ENCODE measurements at regions of chr6 and their contacts with region 1.

Region 1: DNA sequence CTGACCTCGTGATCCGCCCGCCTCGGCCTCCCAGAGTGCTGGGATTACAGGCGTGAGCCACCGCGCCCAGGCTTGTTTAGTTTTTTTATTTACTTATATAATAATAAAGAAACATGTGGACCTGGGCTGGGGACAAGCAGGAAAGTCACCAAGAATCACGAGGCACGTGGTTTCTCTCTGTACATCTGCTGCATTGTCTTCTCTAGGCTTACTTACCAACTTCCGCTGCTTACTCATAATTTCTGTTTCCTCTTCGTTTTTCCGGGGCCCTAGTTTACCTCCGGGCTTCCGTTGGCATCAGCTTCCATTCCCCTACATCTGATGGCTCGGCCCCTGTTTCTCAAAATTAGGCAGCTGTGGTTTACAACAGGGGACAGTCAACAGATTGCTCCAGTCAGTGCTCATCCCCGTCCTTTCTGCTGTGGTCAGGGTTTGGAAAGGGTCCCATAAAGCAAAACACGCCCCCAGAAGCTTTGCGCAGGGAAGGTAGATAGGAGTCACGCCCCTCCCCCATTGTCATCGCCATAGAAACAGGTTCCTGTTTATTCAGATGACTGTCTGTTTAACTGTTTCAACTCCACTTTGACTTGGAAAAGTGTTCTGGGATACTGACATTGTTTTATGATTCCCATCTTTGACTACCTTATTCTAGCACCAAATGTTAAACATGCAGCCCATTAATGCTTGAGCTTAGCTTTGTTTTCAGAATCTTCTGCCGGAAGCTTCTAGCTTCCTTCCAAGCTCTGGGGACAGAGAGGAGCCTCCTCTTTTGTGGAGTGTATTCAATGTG is 31.9 kb upstream of the TXLNB start:
- H3K4me3 Mint-ChIP-seq: peak overlapping the region; percentile 37
- H3K27ac Mint-ChIP-seq: peak overlapping the region; percentile 80
- H3K4me1 Mint-ChIP-seq: peaks cover 54% of the 10 kb centered on the region
- H3K27me3 Mint-ChIP-seq: no peaks in the 10 kb centered on the region

Region 2: DNA sequence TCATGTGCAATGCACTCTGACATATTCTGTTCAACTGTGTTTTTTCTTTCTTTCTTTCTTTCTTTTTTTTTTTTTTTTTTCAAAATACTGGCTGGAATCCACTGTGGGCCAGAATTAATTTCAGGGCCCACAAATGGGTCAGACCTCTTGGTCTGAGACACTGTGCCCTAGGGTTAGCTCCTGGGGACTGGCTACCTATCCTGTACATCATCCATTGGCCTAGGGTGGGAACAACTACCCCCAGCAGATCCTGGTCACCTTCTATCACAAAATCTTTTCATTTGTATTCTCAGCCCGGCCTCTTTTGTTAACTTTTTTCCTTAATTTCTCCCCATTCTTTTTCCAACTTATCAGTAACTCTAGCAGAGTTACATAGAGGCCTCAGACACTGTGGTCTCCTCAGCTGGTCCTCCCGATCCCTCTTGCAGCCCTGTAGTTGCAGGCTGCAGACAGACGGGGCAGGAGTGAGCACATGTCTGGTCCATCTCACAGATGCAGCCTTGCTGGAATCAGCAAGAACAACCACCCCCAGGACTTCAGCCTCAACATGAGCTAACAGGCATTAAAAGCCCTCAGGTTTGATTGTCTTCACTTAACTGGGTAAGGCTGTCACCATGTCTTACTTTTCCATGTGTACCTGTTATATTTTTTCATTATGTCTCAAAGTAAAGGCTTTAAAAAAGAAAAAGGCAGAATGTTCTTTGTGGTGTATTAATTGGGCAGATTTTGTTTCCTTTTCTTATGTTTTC is 73.2 kb before region 1 on chr6:
- intact Hi-C with region 1: loop called (anchors 10 kb)
- H3K4me3 Mint-ChIP-seq: peak overlapping the region; percentile 40
- H3K27ac Mint-ChIP-seq: peak overlapping the region; percentile 83
- H3K4me1 Mint-ChIP-seq: peaks cover 29% of the 10 kb centered on the region
- H3K27me3 Mint-ChIP-seq: no peaks in the 10 kb centered on the region

Region 3: GRCh38 chr6:139271056-139271455 is 52.6 kb before region 1 on chr6:
- intact Hi-C with region 1: no loop called
- H3K4me3 Mint-ChIP-seq: no peak overlapping the region
- H3K27ac Mint-ChIP-seq: peak overlapping the region; percentile 43
- H3K4me1 Mint-ChIP-seq: peaks cover 22% of the 10 kb centered on the region
- H3K27me3 Mint-ChIP-seq: no peaks in the 10 kb centered on the region

Region 4: GRCh38 chr6:139291813-139292619 is 31.7 kb before region 1 on chr6 and contains the start of gene TXLNB:
- intact Hi-C with region 1: loop called (anchors 5 kb)
- H3K4me3 Mint-ChIP-seq: peak within 1 kb of the TSS; percentile 46
- H3K27ac Mint-ChIP-seq: peak within 1 kb of the TSS; percentile 94
- H3K4me1 Mint-ChIP-seq: peaks cover 51% of the 10 kb centered on the region
- H3K27me3 Mint-ChIP-seq: no peaks in the 10 kb centered on the region

Region 5: GRCh38 chr6:139308286-139308916 is 15.3 kb before region 1 on chr6:
- intact Hi-C with region 1: loop called (anchors 2 kb)
- H3K4me3 Mint-ChIP-seq: no peak overlapping the region
- H3K27ac Mint-ChIP-seq: peak overlapping the region; percentile 88
- H3K4me1 Mint-ChIP-seq: peaks cover 38% of the 10 kb centered on the region
- H3K27me3 Mint-ChIP-seq: no peaks in the 10 kb centered on the region

Region 6: GRCh38 chr6:139334806-139335446 is 11.2 kb after region 1 on chr6:
- intact Hi-C with region 1: no loop called
- H3K4me3 Mint-ChIP-seq: no peak overlapping the region
- H3K27ac Mint-ChIP-seq: peak overlapping the region; percentile 10
- H3K4me1 Mint-ChIP-seq: peaks cover 46% of the 10 kb centered on the region
- H3K27me3 Mint-ChIP-seq: no peaks in the 10 kb centered on the region

Region 7: GRCh38 chr6:139373154-139373927 is 49.6 kb after region 1 on chr6:
- intact Hi-C with region 1: no loop called
- H3K4me3 Mint-ChIP-seq: peak overlapping the region; percentile 99
- H3K27ac Mint-ChIP-seq: peak overlapping the region; percentile 100
- H3K4me1 Mint-ChIP-seq: peaks cover 32% of the 10 kb centered on the region
- H3K27me3 Mint-ChIP-seq: no peaks in the 10 kb centered on the region

Region 8: DNA sequence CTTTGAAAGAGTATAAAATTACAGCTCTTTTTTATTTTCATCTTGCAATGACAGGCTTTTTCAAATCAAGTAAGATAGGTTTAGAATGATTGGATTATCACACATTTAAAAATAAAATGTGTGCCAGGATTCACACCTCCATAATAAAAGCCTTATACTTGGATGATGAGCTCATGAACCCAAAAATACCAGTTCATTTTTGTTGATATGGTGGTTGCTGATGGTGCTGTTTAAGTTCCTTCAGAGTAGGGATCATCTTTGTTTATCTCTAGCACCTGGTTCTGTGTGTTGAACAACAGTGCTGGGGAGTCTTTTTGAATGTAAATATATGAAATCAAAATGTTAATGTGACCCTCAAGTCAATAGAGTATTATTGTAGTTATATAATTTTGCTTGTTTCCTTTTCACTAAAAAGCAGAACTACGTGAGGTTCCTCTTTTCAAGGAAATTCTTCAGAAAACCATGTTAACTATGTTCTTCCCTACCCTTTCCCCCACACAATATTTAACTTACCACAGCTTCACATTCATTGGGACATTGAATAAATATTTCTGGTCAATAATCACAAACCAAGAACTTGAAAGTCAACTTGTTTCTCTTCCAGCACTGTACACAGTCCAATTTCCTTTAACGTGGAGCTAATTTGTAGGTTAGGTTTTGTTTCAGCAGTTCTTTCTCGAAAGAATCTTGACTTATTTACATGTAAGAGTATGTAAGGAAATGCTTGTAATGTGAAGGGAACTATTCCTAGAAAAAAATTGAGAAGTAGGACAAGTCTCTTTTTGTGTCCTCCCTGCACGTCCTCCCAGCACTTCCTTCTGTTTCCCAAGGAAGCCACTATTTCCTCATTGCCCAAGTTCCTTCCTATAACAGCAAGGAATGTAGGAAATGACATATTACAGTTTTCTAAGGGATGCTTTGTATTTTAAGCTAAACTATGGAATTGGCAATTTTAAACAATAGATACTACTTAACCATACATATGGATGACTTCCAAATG is 996.7 kb after region 1 on chr6:
- intact Hi-C with region 1: loop called (anchors 5 kb)
- H3K4me3 Mint-ChIP-seq: peak overlapping the region; percentile 39
- H3K27ac Mint-ChIP-seq: peak overlapping the region; percentile 89
- H3K4me1 Mint-ChIP-seq: peaks cover 23% of the 10 kb centered on the region
- H3K27me3 Mint-ChIP-seq: no peaks in the 10 kb centered on the region